Ovary (tissue), 10 donors: ENCODE measurements at regions of chr3 and their contacts with region 1.

Region 1: DNA sequence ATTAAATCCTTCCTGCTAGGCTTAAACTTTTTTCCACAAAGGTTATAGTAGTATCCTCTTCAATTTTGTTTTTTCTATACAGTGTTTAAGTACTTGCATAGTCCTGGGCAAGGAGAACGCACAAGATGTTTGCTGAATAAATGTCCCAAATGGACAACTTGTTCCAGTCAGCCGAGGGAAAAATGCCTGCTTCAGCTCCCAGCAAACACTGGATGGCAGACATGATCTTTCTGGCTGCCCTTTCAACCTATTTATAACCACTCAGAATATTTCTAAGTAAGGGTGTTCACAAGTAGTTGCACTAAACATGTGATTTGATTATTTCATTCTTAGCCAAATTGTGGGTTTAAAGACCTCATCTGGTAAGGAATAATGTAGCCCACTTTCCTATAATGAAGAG is 29.8 kb downstream of the GNB4 start:
- DNase-seq: no peak
- H3K4me3 ChIP-seq: no peak overlapping the region
- H3K27ac ChIP-seq: no peak overlapping the region
- H3K4me1 ChIP-seq: no peaks in the 10 kb centered on the region
- H3K27me3 ChIP-seq: no peaks in the 10 kb centered on the region
- CTCF ChIP-seq: no peak
- EP300 ChIP-seq: no peak
- POLR2A ChIP-seq: no peak

Region 2: DNA sequence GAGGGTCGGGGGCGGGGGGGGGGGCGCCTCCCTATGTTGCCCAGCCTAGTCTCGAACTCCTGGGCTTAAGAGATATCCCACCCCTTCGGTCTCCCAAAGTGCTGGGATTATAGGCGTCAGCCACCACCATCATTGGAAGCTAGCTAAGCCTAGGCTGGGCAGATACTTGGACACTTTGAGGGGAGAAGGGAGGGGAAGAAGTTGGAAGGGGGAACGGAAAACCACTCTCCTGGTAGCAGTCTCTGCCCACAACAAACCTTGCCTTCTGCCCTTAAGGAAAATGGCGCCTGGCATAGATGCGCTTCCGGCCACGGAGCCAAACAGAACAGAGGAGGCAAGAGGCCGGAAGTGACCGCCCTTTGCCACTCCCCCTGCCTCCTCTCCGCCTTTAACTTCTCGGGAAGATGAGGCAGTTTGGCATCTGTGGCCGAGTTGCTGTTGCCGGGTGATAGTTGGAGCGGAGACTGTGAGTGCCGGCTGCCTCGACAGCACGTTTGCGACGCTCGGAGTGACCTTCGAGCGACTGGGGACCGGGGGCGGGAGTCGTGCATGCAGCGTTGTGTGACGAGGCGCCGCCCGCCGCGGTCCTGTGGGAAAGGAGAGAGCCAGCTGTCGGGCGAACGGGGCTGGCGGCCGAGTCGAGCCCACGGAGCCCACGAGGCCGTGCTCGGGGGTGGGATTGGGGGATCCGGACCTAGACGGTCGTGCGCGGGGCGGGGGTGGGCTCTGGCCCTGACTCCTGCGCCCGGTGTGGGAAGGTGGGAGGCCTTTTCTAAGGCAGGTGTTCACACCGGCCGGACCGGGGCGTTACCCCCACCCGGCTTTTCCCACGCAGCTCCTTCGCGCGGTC is 73.9 kb before region 1 on chr3 and contains the start of gene MFN1:
- intact Hi-C with region 1: no loop called
- DNase-seq: peak; percentile 92 to 94 (median 93)
- H3K4me3 ChIP-seq: peak within 1 kb of the TSS; percentile 80
- H3K27ac ChIP-seq: peak within 1 kb of the TSS; percentile 64 to 78
- H3K4me1 ChIP-seq: peaks cover 6% of the 10 kb centered on the region
- H3K27me3 ChIP-seq: no peaks in the 10 kb centered on the region
- CTCF ChIP-seq: no peak
- EP300 ChIP-seq: no peak
- POLR2A ChIP-seq: no peak
- total RNA-seq, gene MFN1: 35.4 to 49.8 (median 39.6) TPM

Region 3: DNA sequence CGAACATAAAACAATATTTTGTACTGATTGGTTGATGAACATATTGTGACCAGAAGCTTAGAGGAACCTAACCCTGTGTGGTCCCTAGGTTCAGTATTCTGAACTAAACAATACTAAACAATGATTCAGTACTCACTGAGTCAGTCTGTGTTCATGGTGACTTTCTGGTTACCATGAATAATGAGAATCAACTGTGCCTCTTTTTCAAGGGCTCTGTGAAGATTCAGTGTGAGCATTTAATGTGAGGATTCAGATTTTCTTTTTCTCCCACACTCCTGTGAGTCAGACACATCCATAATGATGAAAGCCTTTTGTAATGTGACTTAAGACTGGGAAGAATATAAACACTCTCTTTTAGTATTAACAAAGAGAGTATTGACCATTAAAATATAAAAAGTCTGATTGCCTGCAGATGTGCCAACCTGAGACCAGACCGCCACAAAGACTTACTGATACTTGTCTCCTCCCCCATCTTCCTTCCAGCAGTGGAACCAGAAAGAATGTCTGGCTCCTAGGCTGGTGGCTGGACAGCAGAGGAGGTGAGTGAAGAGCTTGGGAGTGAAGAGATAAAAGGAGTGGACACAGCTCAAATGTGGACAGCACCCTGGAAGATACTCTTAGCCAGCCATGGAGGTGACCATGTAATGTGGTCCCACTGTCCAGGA is 123.6 kb after region 1 on chr3:
- intact Hi-C with region 1: loop called in 1 of 4 experiments (anchors 10 kb)
- DNase-seq: no peak
- H3K4me3 ChIP-seq: no peak overlapping the region
- H3K27ac ChIP-seq: no peak overlapping the region
- H3K4me1 ChIP-seq: no peaks in the 10 kb centered on the region
- H3K27me3 ChIP-seq: no peaks in the 10 kb centered on the region
- CTCF ChIP-seq: no peak
- EP300 ChIP-seq: no peak
- POLR2A ChIP-seq: no peak